ENCODE measurements at regions of chr3 and their contacts with region 1.

Region 1: DNA sequence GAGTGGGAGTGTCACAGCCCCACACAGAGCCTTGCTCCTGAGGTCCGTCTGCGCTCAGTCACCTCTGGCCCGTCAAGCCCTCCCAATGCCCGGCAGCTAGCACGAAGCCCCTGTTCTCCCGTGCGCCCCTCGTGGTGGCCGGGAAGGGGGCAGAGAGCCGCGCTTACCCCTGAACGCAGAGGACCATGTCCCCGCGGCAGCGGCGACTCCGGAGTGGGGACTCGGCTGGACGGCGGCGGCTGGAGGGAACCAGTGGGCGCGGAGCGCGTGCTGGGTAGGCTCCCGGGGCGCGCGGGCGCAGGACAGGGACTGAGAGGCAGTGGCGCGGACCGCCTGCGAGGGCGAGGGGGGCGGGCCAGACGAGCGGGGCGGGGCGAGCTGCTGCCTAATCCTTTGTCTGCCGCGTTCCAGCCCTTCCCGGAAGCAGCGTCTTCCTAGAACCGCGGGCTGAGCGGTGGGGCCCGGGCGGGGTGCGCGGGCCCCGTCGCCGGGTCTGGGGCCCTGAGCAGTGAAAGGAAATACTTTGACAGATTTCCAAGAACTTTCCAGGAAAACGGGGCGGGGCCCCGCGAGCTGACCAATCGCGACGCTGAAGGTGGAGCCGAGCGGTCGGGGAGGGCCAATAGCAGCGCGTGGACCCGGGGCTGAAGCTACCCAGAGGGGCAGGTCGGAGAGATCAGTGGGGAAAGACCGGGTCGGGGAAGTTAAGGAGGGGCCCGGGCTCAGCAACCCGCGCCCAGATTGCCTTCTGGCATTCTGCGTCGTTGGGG is at the start of gene CISH:
- DNase-seq: peak; percentile 97
- H3K4me3 ChIP-seq: peak within 1 kb of the TSS; percentile 47 to 73 (median 63)
- H3K27ac ChIP-seq: peak within 1 kb of the TSS; percentile 78 to 87 (median 82)
- H3K4me1 ChIP-seq: peaks cover 0 to 57% (median 34%) of the 10 kb centered on the region in 4 donors
- H3K27me3 ChIP-seq: no peaks in the 10 kb centered on the region
- CTCF ChIP-seq: peak in 2 of 4 experiments; percentile 9 to 11
- EP300 ChIP-seq: peak in 1 of 4 donors; percentile 16
- POLR2A ChIP-seq: peak; percentile 62 to 75
- total RNA-seq, gene CISH: 2.1 to 17.0 (median 5.3) TPM

Region 2: DNA sequence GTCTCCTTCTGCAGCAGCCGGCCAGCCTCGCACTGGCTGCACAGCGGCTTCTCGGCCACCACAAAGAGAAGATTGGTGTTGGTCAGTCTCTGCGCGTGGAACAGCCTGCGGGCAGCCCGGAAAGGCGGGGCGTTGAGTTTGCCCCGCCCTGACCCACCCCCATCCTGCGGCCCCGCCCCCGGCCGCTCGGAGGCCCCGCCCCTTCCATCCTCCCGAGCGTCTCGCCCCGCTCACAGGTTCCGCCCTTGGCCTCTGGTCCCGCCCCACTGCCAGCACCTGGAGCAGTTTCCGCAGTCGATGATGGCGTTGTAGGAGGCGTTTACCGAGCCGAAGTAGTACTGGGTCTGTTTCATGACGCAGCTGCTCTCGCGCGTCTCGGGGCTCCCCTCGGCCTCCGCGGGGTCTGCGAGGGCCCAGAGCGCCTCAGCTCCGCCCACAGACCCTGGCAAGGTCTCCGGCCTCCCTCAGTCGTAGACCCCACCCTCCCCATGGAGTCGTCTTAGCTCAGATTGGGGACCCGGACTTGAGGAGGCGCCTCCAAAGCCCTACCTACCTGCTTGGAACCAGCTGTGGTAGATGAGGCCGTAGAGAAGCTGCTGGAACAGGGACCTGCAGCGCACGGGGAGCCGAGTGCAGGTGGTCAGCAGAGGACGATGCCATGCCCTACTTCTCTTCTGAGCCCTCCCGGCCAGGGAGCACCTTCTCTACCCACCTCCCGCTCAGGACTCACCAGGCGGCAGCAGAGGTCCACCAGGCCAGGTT is 246.4 kb before region 1 on chr3:
- intact Hi-C with region 1: loop called (anchors 5 kb)
- DNase-seq: peak; percentile 93
- H3K4me3 ChIP-seq: peak overlapping the region; percentile 45 to 62 (median 50)
- H3K27ac ChIP-seq: peak overlapping the region; percentile 57 to 72 (median 68)
- H3K4me1 ChIP-seq: peaks cover 0 to 14% (median 13%) of the 10 kb centered on the region in 4 donors
- H3K27me3 ChIP-seq: peaks cover 0 to 15% (median 5%) of the 10 kb centered on the region in 3 donors
- CTCF ChIP-seq: no peak
- EP300 ChIP-seq: no peak
- POLR2A ChIP-seq: no peak

Region 3: DNA sequence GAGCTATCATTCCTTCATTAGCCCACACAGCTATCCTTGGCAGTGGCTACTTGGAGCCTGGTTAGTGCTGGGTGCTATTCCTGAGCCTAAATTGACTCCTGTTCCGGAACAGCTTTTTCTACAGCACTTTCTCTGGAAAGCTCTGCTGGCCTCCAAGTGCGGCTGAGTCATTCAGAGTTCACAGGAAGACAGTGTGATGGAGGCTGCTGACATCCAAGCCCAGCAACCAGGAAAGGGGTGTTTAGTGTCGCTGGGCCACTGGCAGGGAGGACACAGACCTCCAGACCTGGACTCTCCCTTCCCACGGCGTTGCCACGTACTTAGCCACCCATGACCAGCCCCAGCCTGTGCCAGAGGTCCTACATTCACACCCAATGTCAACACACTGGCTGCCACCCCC is 136.9 kb before region 1 on chr3:
- intact Hi-C with region 1: no loop called
- DNase-seq: no peak
- H3K4me3 ChIP-seq: no peak overlapping the region
- H3K27ac ChIP-seq: no peak overlapping the region
- H3K4me1 ChIP-seq: no peaks in the 10 kb centered on the region
- H3K27me3 ChIP-seq: no peaks in the 10 kb centered on the region
- CTCF ChIP-seq: no peak
- EP300 ChIP-seq: no peak
- POLR2A ChIP-seq: no peak

Region 4: DNA sequence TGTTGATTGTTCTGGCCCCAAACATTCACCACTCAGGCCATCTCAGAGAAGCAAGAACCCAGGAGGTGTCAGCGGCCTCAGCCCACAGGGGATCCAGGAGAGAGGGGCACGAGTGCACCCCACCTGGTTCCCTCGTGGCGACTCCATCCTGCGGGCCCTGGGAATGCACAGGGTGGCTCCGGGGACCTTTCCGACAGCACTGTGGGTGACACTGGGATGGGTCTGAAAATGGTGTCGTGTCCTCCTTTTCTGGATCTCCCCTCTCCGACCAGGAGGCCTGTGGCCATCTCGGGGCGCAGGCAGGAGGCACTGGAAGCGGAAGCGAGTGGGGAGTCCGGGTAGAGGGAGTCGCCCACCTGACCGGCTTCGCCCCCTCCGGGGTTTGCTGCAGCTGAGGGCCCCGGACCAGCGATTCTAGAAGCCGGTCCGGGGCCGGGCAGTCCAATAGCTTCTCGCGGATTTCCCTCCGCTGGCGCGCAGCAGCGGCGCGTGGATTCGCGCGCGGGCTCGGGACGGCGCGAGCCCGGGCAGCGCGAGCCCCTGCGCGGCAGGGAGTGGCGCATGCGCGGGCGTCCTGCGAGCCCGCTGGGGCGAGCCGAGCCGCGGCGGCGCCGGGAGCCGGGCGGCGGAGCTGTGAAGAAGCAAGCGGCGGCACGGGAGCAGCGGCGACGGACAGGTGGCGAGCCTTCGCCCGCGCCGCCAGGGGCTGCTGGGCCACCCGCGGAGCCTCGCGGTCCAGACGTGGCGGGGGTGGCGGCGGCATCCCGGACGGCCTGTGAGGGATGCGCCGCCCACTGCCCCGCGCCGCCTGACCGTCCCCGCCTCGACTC is 62.9 kb after region 1 on chr3 and contains the start of gene DOCK3:
- intact Hi-C with region 1: loop called (anchors 2 kb)
- DNase-seq: peak; percentile 82
- H3K4me3 ChIP-seq: peak within 1 kb of the TSS; percentile 33 to 66 (median 64)
- H3K27ac ChIP-seq: peak within 1 kb of the TSS; percentile 46 to 63 (median 48)
- H3K4me1 ChIP-seq: peaks cover 0 to 18% (median 13%) of the 10 kb centered on the region in 4 donors
- H3K27me3 ChIP-seq: peaks cover 0 to 34% (median 16%) of the 10 kb centered on the region in 3 donors
- CTCF ChIP-seq: no peak
- EP300 ChIP-seq: no peak
- POLR2A ChIP-seq: no peak
- total RNA-seq, gene DOCK3: 1.8 to 4.4 (median 3.6) TPM

Region 5: DNA sequence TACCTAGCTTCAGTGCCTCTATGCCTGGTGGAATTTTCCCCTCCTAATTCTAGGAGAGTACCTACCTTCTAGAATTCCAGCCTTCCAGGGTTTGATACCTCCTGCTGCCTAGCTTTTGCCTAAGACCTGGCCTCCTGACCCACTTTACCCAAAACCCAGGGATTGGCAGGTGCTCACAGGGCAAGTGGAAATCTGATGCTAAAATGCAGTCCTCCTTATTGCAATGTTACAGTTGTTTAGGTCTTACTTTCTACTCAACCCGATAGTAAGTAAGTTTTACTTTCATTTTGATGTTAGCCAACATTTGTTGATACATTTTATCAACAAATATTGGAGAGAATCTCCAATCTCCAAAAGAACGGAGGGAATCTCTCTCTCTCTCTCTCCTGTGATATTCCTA is 338.9 kb after region 1 on chr3:
- intact Hi-C with region 1: no loop called
- DNase-seq: no peak
- H3K4me3 ChIP-seq: no peak overlapping the region
- H3K27ac ChIP-seq: no peak overlapping the region
- H3K4me1 ChIP-seq: peaks cover 0 to 7% (median 0%) of the 10 kb centered on the region in 4 donors
- H3K27me3 ChIP-seq: no peaks in the 10 kb centered on the region
- CTCF ChIP-seq: no peak
- EP300 ChIP-seq: no peak
- POLR2A ChIP-seq: no peak

Region 6: GRCh38 chr3:51371943-51372557 is 760.4 kb after region 1 on chr3:
- intact Hi-C with region 1: loop called (anchors 1 kb)
- DNase-seq: no peak
- H3K4me3 ChIP-seq: no peak overlapping the region
- H3K27ac ChIP-seq: no peak overlapping the region
- H3K4me1 ChIP-seq: no peaks in the 10 kb centered on the region
- H3K27me3 ChIP-seq: no peaks in the 10 kb centered on the region
- CTCF ChIP-seq: peak in 3 of 4 experiments; percentile 35 to 48 (median 47)
- EP300 ChIP-seq: no peak
- POLR2A ChIP-seq: no peak

Region 7: GRCh38 chr3:51434746-51435327 is 823.2 kb after region 1 on chr3:
- intact Hi-C with region 1: loop called (anchors 2 kb)
- DNase-seq: no peak
- H3K4me3 ChIP-seq: no peak overlapping the region
- H3K27ac ChIP-seq: no peak overlapping the region
- H3K4me1 ChIP-seq: peaks cover 0 to 4% (median 0%) of the 10 kb centered on the region in 4 donors
- H3K27me3 ChIP-seq: no peaks in the 10 kb centered on the region
- CTCF ChIP-seq: peak in 3 of 4 experiments; percentile 19 to 55 (median 33)
- EP300 ChIP-seq: no peak
- POLR2A ChIP-seq: no peak

Measured in sigmoid colon (tissue), 7 donors.